Endothelial cell of umbilical vein (primary cell): ENCODE measurements at regions of chr9 and their contacts with region 1.

Region 1: DNA sequence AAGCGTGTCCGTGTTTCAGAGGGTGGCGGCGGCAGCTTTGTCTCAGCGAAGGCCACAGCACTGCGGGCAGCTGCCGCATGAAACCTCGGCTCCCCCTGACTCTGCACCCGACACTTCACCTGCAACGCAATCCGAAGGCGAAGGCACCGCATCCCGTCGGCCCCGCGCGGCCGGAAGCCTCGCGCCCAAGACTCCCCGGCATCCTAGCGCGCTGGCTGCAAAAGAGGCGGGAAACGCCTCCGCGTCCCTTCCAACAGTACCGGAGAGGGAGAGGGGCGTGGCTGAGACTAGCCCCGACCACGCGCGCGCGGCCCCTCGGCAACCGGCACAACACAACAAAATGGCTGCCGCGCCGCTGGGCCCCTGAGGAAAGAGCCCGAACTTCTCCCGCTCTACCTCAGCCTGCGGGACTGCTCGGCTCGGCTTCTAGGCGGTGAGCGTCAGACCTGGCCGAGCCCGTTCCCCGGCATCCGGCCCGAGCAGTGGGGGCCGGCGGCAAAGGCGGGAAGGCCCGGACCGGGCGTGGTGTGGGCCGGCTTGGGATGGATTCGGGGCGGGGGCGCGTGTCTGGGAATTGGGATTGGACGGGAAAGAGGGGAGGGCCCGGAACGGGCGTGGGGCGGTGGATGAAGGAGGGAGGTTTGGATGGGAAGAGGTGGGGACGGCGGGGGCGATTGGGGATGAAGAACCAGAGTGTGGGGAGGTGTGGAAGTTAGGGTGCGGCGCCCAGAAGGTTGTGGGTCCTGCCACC is at the start of gene CNTRL:
- DNase-seq: peak; percentile 86
- H3K4me3 ChIP-seq: peak within 1 kb of the TSS; percentile 6 to 78 (median 36)
- H3K27ac ChIP-seq: peak within 1 kb of the TSS; percentile 56
- H3K4me1 ChIP-seq: peaks cover 25% of the 10 kb centered on the region
- H3K27me3 ChIP-seq: no peaks in the 10 kb centered on the region
- CTCF ChIP-seq: no peak
- POLR2A ChIP-seq: peak; percentile 49
- total RNA-seq, gene CNTRL: 21.8 and 22.0 TPM in 2 replicates

Region 2: GRCh38 chr9:120619751-120620655 is 454.8 kb before region 1 on chr9:
- CTCF ChIA-PET with region 1: interaction called, 7 read pairs
- POLR2A ChIA-PET with region 1: no interaction called
- dilution Hi-C with region 1: no loop called
- intact Hi-C with region 1: loop called (anchors 2 kb)
- DNase-seq: peak; percentile 81
- H3K4me3 ChIP-seq: no peak overlapping the region
- H3K27ac ChIP-seq: no peak overlapping the region
- H3K4me1 ChIP-seq: no peaks in the 10 kb centered on the region
- H3K27me3 ChIP-seq: no peaks in the 10 kb centered on the region
- CTCF ChIP-seq: peak; percentile 67 to 68
- POLR2A ChIP-seq: no peak

Region 3: GRCh38 chr9:120755827-120756434 is 318.9 kb before region 1 on chr9:
- CTCF ChIA-PET with region 1: interaction called, 38 read pairs
- POLR2A ChIA-PET with region 1: no interaction called
- dilution Hi-C with region 1: no loop called
- intact Hi-C with region 1: loop called (anchors 1 kb)
- DNase-seq: peak; percentile 65
- H3K4me3 ChIP-seq: no peak overlapping the region
- H3K27ac ChIP-seq: no peak overlapping the region
- H3K4me1 ChIP-seq: no peaks in the 10 kb centered on the region
- H3K27me3 ChIP-seq: no peaks in the 10 kb centered on the region
- CTCF ChIP-seq: peak; percentile 70 to 74
- POLR2A ChIP-seq: no peak

Region 4: GRCh38 chr9:120868676-120869359 is 206.0 kb before region 1 on chr9:
- CTCF ChIA-PET with region 1: interaction called, 3 read pairs
- POLR2A ChIA-PET with region 1: no interaction called
- dilution Hi-C with region 1: no loop called
- intact Hi-C with region 1: loop called (anchors 2 kb)
- DNase-seq: peak; percentile 86
- H3K4me3 ChIP-seq: peak overlapping the region in 2 of 3 experiments; percentile 19 to 58
- H3K27ac ChIP-seq: no peak overlapping the region
- H3K4me1 ChIP-seq: peaks cover 13% of the 10 kb centered on the region
- H3K27me3 ChIP-seq: no peaks in the 10 kb centered on the region
- CTCF ChIP-seq: peak; percentile 27 to 41
- POLR2A ChIP-seq: no peak

Region 5: DNA sequence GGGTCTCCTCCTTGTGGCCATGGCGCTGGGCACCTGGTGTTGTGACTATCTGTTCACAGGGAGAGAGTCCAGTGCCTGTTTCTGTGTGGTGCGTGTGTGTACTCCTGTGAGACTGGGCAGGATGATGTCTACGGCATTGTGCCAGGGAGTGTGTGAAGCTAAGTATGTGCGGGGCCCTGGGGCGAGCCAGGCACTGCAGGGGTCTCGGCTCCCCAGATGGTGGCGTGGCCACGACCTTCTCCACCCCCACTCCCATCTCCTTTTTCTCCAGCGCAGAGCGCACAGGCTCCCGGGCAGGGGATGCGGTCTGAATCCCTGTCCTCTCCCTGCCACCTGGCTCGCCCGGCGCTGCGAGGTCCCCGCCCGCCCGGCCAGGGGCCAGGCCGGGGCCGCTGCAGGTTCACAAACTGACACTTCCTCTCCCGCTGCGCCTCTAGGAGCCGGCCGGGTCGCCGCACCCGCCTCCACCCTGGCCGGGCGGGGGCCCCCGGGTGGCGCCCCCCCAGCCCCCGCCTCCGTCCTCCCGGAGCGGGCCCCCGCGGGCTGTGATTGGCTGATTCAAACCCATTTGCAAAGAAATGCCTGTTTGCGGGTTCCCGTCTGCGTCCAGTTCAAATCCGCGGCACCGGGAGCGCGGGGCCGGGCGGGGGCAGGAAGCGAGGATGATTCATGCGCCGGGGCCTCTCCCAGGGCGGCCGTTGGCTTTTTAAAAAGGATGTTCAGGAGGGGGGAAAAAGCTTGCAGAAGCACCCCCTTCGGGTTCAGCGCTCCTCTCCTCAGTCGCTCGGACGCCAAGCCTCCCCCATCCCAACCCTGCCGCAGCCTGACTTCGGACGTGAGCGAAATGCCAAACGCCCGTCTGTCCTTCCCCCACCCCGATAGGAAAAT is 198.6 kb before region 1 on chr9:
- CTCF ChIA-PET with region 1: interaction called, 3 read pairs
- POLR2A ChIA-PET with region 1: no interaction called
- dilution Hi-C with region 1: no loop called
- intact Hi-C with region 1: loop called (anchors 2 kb)
- DNase-seq: peak; percentile 90
- H3K4me3 ChIP-seq: peak overlapping the region; percentile 66 to 86 (median 70)
- H3K27ac ChIP-seq: peak overlapping the region; percentile 74
- H3K4me1 ChIP-seq: peaks cover 26% of the 10 kb centered on the region
- H3K27me3 ChIP-seq: no peaks in the 10 kb centered on the region
- CTCF ChIP-seq: peak in 1 of 2 donors; percentile 11
- POLR2A ChIP-seq: no peak

Region 6: DNA sequence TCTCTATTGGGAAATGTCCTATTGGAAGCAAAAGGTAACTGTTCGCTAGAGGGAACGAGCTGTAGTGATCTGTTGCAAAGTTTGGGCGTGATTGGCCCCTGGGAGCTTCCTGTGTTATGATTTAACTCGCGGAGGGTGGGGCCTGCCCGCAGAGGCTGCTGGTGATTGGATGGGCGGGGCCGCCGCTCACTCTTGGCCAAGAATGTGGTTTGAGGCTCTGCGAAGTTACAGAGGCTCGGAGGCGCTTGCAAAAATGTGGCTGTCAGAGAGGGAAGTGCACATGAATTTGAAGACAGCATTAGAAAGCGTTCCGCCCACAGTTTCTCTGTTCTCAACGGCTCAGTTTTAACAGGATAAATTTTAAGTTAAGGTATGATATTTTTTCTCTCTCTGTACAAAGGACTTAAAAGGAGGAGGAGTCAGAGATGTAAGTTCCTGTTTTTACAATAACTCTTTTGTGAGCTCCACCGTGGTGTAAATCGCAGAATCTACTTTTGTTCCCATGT is 46.8 kb after region 1 on chr9:
- CTCF ChIA-PET with region 1: interaction called, 7 read pairs
- POLR2A ChIA-PET with region 1: no interaction called
- dilution Hi-C with region 1: no loop called
- intact Hi-C with region 1: loop called (anchors 1 kb)
- DNase-seq: peak; percentile 98
- H3K4me3 ChIP-seq: peak overlapping the region; percentile 38 to 93 (median 79)
- H3K27ac ChIP-seq: peak overlapping the region; percentile 59
- H3K4me1 ChIP-seq: peaks cover 11% of the 10 kb centered on the region
- H3K27me3 ChIP-seq: no peaks in the 10 kb centered on the region
- CTCF ChIP-seq: no peak
- POLR2A ChIP-seq: peak; percentile 65

Region 7: GRCh38 chr9:121399883-121400607 is 325.2 kb after region 1 on chr9:
- CTCF ChIA-PET with region 1: no interaction called
- POLR2A ChIA-PET with region 1: no interaction called
- dilution Hi-C with region 1: no loop called
- intact Hi-C with region 1: loop called (anchors 10 kb)
- DNase-seq: peak; percentile 82
- H3K4me3 ChIP-seq: no peak overlapping the region
- H3K27ac ChIP-seq: no peak overlapping the region
- H3K4me1 ChIP-seq: peaks cover 21% of the 10 kb centered on the region
- H3K27me3 ChIP-seq: no peaks in the 10 kb centered on the region
- CTCF ChIP-seq: peak; percentile 25 to 35
- POLR2A ChIP-seq: no peak